ENCODE measurements at regions of chr3 and their contacts with region 1.

Region 1: DNA sequence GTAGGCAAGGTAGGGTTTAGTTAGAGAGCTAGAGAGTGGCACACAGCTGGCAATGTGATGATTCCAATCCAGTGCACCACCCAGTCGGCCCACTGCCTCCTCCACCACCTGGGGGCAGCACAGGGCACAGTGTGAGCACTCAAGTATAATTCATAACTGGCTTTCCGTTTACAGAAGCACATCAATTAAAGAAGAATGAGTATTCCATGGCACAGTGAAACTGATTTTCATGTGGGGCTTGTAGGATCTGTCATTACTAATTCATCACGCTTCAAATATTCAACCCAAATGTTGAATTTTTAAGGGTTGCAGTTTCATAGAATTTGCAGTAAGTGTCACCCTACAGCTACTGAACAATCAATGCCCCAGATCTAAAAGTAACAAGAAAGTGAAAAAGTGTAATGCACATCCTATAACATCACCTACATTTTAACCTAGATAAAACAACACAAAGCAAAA is 149.9 kb downstream of the IGSF11 start:
- DNase-seq: peak; percentile 23
- CTCF ChIP-seq: peak; percentile 94

Region 2: GRCh38 chr3:119098619-119099222 is 213.9 kb after region 1 on chr3:
- in situ Hi-C with region 1: loop called (anchors 10 kb)
- DNase-seq: peak; percentile 41
- CTCF ChIP-seq: peak; percentile 71

Region 3: GRCh38 chr3:119240591-119241434 is 356.0 kb after region 1 on chr3 and contains the start of gene B4GALT4:
- in situ Hi-C with region 1: loop called (anchors 25 kb)
- DNase-seq: peak; percentile 91
- CTCF ChIP-seq: no peak

Region 4: DNA sequence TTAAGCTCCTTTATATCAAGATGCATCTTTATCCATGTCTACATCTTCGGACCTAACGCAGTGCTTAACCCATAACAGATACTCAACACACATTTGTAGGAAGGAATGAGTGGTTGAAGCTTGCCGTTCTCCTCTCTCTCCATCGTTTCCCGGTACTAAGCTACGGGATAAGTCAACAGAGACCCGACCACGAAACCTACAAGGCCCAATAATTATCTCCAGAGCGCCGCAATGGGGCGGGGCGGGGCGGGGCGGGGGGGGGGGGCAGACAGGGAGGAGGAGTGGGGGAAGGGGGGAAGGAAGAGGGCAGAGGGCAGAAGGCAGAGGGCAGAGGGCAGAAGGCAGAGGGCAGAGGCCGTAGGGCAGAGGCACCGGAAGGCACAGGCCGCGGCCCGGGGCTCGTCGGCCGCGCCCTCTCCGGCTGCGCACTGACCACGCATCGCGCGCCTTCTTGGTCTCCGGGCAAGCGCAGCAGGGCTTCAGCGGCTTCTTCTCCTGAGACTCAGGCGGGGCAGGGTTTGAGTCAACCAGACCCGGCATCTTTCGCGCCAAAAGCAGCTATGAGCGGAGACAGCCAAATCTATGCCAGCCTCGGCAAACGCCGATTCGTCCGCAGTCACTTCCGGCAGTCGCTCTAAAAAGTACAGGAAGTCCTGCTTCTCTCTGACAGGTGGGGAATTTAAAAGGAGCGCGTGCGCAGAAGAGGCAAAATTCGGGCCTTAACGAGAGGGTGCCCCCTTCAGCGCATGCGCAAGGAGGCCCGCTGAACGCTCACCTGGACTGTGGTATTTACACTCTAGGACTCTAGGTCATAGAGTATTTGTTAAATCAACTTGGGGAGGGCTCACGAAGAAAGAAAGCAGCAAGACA is 792.2 kb after region 1 on chr3 and contains the start of gene COX17:
- in situ Hi-C with region 1: loop called (anchors 10 kb)
- DNase-seq: peak; percentile 94
- CTCF ChIP-seq: no peak

Measured in GM13977 (cell line).